ENCODE measurements at regions of chr19 and their contacts with region 1.

Region 1: DNA sequence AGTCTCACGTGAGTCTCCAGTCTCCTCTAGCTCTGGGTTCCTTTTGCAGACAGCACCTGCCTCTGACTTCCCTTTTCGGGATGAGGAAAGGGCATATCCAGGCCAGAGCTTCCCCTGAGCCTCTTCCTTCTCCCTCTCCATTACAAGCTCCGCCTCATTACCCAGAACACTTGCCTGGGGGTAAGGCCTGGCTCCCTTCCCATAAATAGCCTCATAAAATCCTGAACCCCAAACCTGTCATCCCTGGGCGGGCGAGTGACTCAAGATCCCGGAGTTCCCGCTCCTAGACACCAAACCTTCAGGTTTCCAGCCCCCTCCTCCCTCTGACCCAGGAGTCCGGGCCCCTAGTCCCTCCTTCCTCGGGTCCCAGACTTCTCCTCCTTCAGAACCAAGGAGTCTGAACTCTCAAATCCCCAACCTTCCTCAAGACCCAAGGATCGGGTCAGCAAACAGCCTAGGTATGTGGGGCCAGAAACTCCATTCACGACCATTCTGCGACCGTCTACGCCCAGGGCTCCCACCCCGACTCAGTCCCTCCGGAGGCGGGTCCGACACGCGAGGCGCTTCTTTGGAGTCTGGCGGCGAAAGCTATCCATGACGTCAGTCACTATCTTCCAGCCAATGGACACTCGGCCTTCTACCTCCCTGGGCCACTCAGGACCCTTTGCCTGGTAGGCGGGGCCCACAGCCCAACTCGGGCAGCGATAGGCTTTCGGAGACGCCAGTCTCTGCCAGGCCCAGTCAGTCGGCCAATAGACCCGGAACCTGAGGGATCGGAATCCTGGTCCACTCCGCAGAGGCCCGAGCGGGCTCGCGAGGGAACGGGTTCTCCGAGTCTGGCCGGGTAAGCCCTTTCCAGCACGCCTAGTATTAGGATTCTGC is 6.5 kb upstream of the CNFN start:
- DNase-seq: peak; percentile 98
- ATAC-seq: peak; percentile 96 to 98

Region 2: GRCh38 chr19:42325273-42325895 is 71.2 kb before region 1 on chr19 and contains the start of gene MEGF8:
- intact Hi-C with region 1: loop called in 1 of 2 experiments (anchors 5 kb)
- DNase-seq: peak; percentile 97
- ATAC-seq: peak; percentile 98
- total RNA-seq, gene MEGF8: 28.2 to 29.5 TPM

Region 3: GRCh38 chr19:42363614-42364346 is 32.8 kb before region 1 on chr19:
- intact Hi-C with region 1: no loop called
- DNase-seq: no peak
- ATAC-seq: no peak

Region 4: DNA sequence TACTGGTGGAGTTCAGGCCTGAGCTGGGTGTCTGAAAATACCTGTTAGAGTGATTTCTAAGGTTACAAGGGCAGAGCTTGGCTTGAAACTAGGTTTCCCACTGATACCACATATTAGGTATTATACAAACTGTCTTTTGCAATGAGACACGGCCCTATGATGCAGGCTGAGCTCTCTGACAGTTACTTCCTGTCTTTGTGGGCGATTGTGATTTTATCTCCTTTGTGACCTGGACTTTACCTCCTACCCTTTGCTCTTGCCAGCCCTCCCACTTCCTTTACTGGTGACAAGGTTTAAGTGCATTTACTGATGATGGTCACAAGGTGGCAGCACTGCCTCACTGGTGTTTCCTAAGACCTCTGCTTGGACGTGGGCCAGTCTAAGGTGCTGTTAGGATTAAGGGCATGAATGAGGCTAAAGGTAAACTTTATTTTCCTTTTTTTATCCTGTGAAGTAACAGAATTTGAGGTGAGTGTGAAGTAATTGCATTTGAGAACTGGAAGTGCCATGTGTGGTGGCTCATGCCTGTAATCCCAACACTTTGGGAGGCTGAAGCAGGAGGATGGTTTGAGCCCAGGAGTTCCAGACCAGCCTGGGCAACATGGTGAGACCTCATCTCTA is 53.8 kb after region 1 on chr19:
- intact Hi-C with region 1: no loop called
- DNase-seq: peak; percentile 86
- ATAC-seq: peak; percentile 84 to 90

Region 5: GRCh38 chr19:42461700-42462324 is 65.2 kb after region 1 on chr19:
- intact Hi-C with region 1: no loop called
- DNase-seq: no peak
- ATAC-seq: peak in 1 of 2 donors; percentile 54

Measured in left cardiac atrium (tissue), 4 donors.